Caco-2 (cell line): ENCODE measurements at regions of chr3 and their contacts with region 1.

Region 1: DNA sequence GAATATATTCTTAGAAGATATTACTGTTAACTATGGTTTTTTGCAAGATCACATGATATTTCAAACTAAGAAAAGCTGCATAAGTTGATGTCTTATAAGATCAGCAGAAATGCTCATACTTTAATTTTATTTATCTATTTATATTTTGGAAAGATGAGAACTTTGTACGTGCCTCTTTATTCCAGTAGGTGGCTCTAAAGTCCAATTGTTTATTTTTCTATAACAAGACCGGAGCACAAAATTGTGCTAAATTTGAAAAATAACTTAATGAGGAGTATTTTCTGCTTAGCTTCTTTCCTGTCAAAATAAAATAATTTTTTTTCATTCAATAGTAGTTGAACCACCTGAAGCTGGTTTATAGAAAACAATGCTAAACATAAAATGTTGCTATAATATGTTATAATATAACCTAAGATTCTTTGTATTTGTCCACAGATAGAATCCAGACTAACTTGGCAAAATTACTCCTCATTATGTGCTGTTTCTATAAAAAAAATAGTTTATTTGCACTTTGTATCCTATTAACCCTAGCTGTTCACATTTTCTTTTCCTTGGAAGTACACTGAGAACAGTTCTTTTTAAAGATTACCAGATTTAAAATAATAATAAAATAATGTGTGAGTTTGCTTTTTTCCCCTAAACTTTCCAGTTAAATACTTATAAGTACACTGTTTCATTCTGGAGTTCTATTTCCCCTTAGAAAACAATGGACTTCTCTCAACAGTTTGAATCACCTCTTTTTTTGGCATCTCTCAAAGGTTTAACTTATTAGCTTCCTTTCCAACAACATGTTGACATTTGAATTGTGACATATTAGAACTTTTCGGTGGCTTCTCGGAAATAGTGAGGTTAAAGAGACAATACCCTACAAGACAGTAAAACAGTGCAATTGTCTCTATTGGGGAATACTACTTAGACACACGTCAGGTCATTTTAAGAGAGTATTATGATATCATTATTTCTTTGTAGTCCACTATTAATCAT is 530.0 kb downstream of the MECOM start:
- DNase-seq: no peak
- H3K4me3 ChIP-seq: no peak overlapping the region
- H3K4me3 Mint-ChIP-seq: no peak overlapping the region
- H3K27ac Mint-ChIP-seq: no peak overlapping the region
- H3K4me1 ChIP-seq: peaks cover 4% of the 10 kb centered on the region; the same call in 1 of the 2 replicates
- H3K4me1 Mint-ChIP-seq: no peaks in the 10 kb centered on the region
- H3K27me3 ChIP-seq: no peaks in the 10 kb centered on the region
- H3K27me3 Mint-ChIP-seq: no peaks in the 10 kb centered on the region
- CTCF ChIP-seq: peak; percentile 8 to 24

Region 2: DNA sequence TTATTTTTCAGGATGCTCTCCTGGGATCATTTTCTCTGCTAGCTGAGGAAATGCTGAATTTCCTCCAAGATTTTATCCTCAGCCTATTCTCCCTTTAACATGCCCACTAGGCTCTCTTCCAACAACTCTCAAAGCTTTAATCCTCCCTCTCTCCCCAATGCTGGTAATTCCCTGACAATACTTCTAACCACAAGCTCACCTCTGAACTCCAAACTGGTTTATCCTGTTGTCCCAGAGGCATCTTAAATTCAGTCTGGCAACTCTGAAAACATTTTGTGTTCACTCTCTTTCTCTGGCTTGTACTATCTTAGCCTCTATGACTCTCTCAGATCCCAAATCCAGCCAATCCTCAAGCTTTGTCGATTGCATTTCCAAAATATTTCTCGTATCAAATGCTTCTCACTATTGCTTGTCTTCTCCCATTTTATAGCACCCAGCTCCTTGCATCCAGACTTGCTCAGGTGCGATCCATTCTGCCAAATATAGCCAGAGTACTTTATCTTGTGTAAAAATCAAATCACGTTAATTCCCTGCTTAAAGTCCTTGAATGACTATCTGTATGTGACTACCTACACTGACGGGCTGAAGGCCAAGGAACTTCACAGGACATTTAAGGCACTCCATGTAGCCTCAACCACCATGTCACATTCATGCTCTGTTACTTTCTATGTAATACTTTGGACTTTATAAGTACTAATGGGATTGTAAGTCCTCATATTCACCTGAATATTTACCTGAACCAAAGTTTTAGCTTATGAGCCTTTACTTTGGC is 40.0 kb after region 1 on chr3:
- CTCF ChIA-PET with region 1: no interaction called
- POLR2A ChIA-PET with region 1: no interaction called
- intact Hi-C with region 1: no loop called
- DNase-seq: peak in 1 of 2 experiments; percentile 32
- H3K4me3 ChIP-seq: no peak overlapping the region
- H3K4me3 Mint-ChIP-seq: no peak overlapping the region
- H3K27ac Mint-ChIP-seq: no peak overlapping the region
- H3K4me1 ChIP-seq: peaks cover 8% of the 10 kb centered on the region; the same call in 1 of the 2 replicates
- H3K4me1 Mint-ChIP-seq: peaks cover 16% of the 10 kb centered on the region
- H3K27me3 ChIP-seq: no peaks in the 10 kb centered on the region
- H3K27me3 Mint-ChIP-seq: no peaks in the 10 kb centered on the region
- CTCF ChIP-seq: no peak

Region 3: DNA sequence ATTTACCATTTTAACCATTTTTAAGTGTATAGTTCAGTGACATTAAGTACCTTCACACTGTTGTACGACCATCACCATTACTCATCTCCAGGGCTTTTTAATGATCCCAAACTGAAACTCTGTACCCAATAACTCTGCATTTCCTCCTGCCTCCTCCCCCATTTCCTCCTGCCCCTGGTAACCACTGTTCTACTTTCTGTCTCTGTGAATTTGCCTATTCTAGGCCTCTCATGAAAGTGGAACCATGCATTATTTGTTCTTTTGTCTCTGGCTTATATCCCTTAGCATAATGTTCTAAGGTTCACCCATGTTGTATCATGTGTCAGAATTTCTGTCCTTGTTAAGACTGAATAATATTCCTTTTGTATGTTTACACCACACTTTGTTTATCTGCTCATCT is 375.9 kb after region 1 on chr3:
- CTCF ChIA-PET with region 1: no interaction called
- POLR2A ChIA-PET with region 1: no interaction called
- intact Hi-C with region 1: loop called (anchors 5 kb)
- DNase-seq: no peak
- H3K4me3 ChIP-seq: no peak overlapping the region
- H3K4me3 Mint-ChIP-seq: no peak overlapping the region
- H3K27ac Mint-ChIP-seq: no peak overlapping the region
- H3K4me1 ChIP-seq: no peaks in the 10 kb centered on the region
- H3K4me1 Mint-ChIP-seq: no peaks in the 10 kb centered on the region
- H3K27me3 ChIP-seq: no peaks in the 10 kb centered on the region
- H3K27me3 Mint-ChIP-seq: no peaks in the 10 kb centered on the region
- CTCF ChIP-seq: no peak

Region 4: GRCh38 chr3:169744366-169745054 is 611.0 kb after region 1 on chr3:
- CTCF ChIA-PET with region 1: no interaction called
- POLR2A ChIA-PET with region 1: no interaction called
- intact Hi-C with region 1: loop called (anchors 2 kb)
- DNase-seq: no peak
- H3K4me3 ChIP-seq: no peak overlapping the region
- H3K4me3 Mint-ChIP-seq: no peak overlapping the region
- H3K27ac Mint-ChIP-seq: no peak overlapping the region
- H3K4me1 ChIP-seq: peaks cover 12% of the 10 kb centered on the region; the same call in 1 of the 2 replicates
- H3K4me1 Mint-ChIP-seq: peaks cover 8% of the 10 kb centered on the region
- H3K27me3 ChIP-seq: no peaks in the 10 kb centered on the region
- H3K27me3 Mint-ChIP-seq: peaks cover 2% of the 10 kb centered on the region
- CTCF ChIP-seq: peak; percentile 30 to 31